ENCODE measurements at regions of chr6 and their contacts with region 1.

Region 1: DNA sequence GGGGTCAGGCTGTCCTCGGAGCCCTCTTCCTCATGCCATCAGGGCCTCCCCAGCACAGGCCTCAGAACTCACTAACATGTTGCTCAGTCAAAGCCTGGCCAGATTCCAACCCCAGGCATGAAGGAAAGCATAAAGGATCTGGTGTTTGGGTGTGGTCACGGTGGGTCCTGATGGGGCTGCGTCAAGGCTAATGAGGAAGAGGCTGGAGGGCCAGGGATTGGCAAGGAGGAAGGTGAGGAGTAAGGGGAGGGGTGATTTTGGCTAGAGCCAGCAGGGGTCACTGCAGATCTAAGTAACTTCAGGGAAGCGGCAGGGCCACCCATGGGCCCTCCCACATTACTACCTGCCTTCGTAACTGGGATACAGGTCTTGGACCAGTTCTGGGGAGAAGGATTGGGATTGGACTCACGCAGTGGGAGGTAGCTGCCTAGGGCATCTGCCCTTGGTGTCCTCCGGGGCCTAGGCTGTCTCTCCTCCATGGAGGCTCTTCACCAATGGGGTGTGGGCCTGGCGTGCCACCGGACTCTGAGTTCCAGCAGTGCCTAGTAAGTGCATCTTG is 36.2 kb upstream of the MRPS18A start:
- DNase-seq: peak; percentile 87
- ATAC-seq: peak; percentile 82
- H3K4me3 Mint-ChIP-seq: no peak overlapping the region
- H3K27ac Mint-ChIP-seq: peak overlapping the region; percentile 90
- H3K4me1 Mint-ChIP-seq: peaks cover 26% of the 10 kb centered on the region
- H3K27me3 Mint-ChIP-seq: no peaks in the 10 kb centered on the region

Region 2: GRCh38 chr6:43621429-43622180 is 102.2 kb before region 1 on chr6:
- CTCF ChIA-PET with region 1: no interaction called
- POLR2A ChIA-PET with region 1: no interaction called
- intact Hi-C with region 1: no loop called
- DNase-seq: no peak
- ATAC-seq: no peak
- H3K4me3 Mint-ChIP-seq: no peak overlapping the region
- H3K27ac Mint-ChIP-seq: no peak overlapping the region
- H3K4me1 Mint-ChIP-seq: peaks cover 2% of the 10 kb centered on the region
- H3K27me3 Mint-ChIP-seq: no peaks in the 10 kb centered on the region

Region 3: GRCh38 chr6:43667245-43668150 is 56.3 kb before region 1 on chr6:
- CTCF ChIA-PET with region 1: interaction called, 10 read pairs
- POLR2A ChIA-PET with region 1: no interaction called
- intact Hi-C with region 1: loop called in 1 of 2 experiments (anchors 2 kb)
- DNase-seq: peak; percentile 87
- ATAC-seq: peak; percentile 53
- H3K4me3 Mint-ChIP-seq: peak overlapping the region; percentile 43
- H3K27ac Mint-ChIP-seq: peak overlapping the region; percentile 77
- H3K4me1 Mint-ChIP-seq: peaks cover 44% of the 10 kb centered on the region
- H3K27me3 Mint-ChIP-seq: no peaks in the 10 kb centered on the region

Region 4: DNA sequence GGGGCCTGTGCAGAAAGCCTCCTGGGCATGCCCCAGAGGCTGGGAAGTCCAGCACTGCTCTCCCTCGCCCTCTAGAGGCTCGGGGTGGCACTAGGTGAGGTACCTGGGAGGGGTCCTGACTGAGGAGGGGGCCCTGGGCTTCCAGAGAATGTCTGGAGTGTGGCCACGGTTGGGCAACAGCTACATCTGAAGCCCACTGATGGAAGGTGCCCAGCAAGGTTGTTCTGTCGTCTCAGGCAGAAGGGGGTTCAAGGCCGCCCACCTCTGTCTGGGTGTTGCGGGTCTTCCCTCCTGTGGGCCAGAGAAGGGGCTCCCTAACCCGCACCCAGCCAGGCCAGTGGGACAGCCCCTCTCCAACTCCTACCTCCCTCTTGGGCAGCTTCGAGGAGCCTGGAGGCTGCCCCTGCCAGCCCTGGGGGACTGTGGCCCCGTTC is 34.8 kb after region 1 on chr6:
- CTCF ChIA-PET with region 1: interaction called, 5 read pairs
- POLR2A ChIA-PET with region 1: no interaction called
- intact Hi-C with region 1: loop called in 1 of 2 experiments (anchors 1 kb)
- DNase-seq: peak; percentile 64
- ATAC-seq: peak; percentile 81
- H3K4me3 Mint-ChIP-seq: no peak overlapping the region
- H3K27ac Mint-ChIP-seq: no peak overlapping the region
- H3K4me1 Mint-ChIP-seq: no peaks in the 10 kb centered on the region
- H3K27me3 Mint-ChIP-seq: peaks cover 6% of the 10 kb centered on the region

Region 5: DNA sequence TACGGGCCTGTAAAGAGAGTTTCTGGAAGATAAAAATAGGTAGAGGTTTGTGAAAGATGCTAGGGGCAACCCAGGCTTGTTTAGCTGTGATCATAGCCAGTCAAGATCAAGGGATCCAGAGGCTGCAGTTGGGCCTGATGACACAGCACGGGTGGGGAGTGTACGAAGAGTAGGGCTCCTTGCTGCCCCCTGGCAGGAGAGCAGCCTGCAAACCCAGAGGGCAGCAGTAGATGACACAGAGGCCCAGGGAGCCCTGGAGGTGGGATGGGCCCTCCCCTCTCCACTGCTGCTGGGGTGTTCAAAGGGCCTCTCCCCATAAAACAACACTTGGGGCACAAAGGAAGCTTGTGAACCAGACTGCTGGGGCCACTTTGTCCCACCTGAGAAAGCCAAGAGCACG is 93.4 kb after region 1 on chr6:
- CTCF ChIA-PET with region 1: no interaction called
- POLR2A ChIA-PET with region 1: interaction called, 3 read pairs
- intact Hi-C with region 1: loop called in 1 of 2 experiments (anchors 5 kb)
- DNase-seq: peak; percentile 54
- ATAC-seq: peak; percentile 75
- H3K4me3 Mint-ChIP-seq: no peak overlapping the region
- H3K27ac Mint-ChIP-seq: no peak overlapping the region
- H3K4me1 Mint-ChIP-seq: peaks cover 6% of the 10 kb centered on the region
- H3K27me3 Mint-ChIP-seq: no peaks in the 10 kb centered on the region

Region 6: GRCh38 chr6:44002593-44003344 is 279.0 kb after region 1 on chr6:
- CTCF ChIA-PET with region 1: no interaction called
- POLR2A ChIA-PET with region 1: no interaction called
- intact Hi-C with region 1: loop called (anchors 1 to 5 kb)
- DNase-seq: peak; percentile 87
- ATAC-seq: peak; percentile 65
- H3K4me3 Mint-ChIP-seq: peak overlapping the region; percentile 58
- H3K27ac Mint-ChIP-seq: no peak overlapping the region
- H3K4me1 Mint-ChIP-seq: peaks cover 11% of the 10 kb centered on the region
- H3K27me3 Mint-ChIP-seq: peaks cover 16% of the 10 kb centered on the region

Region 7: DNA sequence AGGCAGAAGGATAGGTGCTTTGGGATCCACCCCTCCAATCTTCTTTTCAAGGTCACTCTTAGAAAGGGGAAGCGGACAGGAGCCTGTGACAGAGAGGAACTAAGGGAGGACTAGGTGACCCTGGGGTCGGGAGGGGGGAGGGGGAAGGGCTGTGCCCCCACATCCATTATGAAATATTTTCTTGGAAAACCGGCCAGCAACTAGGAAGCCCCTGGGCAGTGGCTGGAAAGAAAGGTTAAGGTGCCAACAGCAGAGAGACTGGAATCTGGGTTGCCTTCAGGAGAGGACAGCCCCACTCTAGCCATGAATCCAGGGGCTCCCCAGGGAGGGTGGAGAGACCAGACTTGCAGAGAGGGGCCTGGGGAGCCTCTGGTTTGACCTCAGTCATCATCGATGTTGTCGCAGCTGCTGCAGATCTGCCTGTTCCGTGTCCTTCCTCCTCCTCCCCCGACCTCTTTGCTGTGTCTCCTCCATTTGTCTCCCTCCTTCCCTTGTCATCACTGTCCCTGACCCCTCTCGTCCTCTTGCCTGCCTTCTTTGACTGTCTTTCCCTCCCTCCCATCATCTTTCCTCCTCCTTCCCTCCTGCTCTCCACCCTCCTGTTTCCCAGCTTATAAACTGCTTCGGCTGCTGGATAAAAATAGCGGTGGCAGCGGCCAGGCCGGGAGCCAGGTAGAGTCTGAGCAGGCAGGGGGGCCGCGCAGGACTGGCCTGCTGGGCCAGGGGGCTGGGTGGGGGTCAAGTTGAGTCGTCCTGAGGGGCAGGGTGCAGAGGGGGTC is 502.7 kb after region 1 on chr6:
- CTCF ChIA-PET with region 1: no interaction called
- POLR2A ChIA-PET with region 1: no interaction called
- intact Hi-C with region 1: no loop called
- DNase-seq: no peak
- ATAC-seq: no peak
- H3K4me3 Mint-ChIP-seq: no peak overlapping the region
- H3K27ac Mint-ChIP-seq: no peak overlapping the region
- H3K4me1 Mint-ChIP-seq: peaks cover 30% of the 10 kb centered on the region
- H3K27me3 Mint-ChIP-seq: no peaks in the 10 kb centered on the region